Right ventricle myocardium inferior (tissue), 1 donor: ENCODE measurements at regions of chr1 and their contacts with region 1.

Region 1: DNA sequence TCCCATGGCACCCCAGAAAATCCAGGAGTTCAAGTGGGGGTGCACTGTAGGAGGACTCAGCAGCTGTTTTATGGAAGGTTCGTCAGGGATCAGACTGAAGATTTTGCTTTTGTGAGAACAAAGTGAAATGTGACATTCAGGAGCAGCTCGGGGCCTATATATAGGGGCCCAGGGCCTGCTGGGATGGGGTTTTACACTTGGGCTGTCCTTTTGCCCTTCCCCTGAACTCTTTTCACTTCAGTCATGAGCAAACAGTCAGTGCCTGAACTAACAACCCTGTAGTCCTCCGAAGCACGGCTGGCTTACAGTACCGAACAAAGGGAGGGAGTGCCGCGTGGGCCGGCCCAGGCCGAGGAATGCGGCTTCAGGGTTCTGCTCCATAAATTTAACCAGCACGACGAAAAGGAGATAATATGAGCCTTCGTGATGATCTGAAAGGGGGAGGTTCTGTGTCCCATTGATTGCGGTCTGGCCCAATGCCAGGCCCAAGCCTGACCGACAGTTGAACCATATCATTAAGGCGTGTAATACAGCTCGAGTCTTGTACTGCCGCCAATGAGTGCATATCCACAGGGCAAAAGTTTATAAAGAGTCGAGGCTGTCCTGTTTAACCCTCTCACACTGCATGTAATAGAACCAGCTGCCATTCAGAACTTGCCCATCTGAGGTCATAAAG is 139.9 kb downstream of the DHRS3 start:
- DNase-seq: peak; percentile 91
- ATAC-seq: peak; percentile 73

Region 2: DNA sequence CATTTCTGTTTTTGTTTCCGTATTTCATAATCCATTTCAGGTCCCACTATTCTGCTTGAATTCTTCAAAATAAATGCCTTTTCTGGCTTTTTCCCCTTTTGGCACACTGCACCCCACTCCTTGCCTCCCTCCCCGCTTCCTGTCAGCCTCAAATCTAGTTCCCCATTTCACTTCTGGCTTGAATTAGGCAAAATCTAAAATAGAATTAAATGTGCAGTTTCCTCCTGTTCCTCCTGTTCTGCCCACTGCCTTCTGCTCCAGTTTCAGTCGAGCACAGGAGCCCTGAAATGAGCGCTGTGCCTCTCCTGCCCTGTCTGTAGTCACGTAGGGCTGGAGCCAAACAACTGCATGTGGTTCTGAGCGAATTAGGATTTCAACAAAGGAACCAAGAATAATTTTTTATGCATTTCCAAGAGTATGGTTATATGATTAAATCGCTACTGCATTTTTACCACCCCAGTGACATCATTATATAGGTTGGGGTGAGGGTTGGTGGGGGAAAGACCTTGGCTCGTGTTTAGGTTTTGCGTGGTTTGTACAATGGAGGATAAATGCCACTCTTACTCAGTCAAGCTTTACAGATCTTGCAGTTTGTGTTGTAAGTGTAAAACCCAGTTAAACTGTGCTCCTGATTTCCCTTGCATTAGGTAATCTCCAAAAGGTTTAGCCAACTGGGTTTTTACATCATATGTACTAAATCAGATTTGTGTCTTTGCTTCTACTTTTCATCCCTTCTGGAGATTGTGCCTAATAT is 133.3 kb before region 1 on chr1:
- intact Hi-C with region 1: loop called (anchors 5 kb)
- DNase-seq: no peak
- ATAC-seq: peak; percentile 56

Region 3: DNA sequence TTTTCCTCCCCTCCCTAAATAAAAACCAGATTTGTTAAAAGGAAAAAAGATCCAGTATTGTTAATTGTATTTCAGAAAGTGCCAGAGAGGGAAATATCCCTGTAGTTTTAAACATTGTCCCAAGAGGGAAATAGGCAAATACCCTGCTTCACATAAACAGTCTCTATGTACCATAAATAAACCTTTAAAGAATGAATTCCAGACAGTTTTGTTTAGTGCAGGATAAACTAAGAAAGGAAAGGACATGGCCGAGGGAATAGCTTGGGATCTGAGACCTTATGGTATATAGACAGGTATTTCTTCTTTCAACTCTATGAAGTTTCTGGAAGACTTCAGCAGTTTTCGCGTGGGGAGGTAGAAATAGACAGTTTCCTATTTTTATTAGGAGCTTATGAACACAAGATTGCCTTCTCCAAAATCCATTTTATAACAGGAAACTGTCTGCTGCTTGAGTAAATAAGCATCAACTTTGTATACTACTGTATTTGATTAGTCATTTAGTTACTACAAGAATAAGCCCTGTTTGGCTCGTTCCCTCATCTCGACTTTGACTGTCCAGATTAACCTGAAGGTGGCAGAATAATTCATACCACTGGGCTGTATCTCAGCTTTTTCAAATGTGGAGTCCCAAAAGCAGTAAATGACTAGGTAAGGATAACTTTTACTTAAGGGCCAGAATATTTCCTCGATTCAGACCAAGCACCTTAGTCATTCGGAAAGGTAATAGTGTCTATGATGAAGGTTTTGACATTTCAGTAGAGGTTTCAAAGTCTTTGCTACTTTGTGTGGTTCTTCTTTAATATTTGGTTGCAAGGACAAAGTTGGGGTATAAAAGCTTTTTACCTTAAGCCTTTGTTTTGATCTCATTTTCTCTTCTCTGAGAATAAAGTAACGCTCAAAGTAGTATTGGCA is 70.8 kb before region 1 on chr1:
- intact Hi-C with region 1: loop called (anchors 5 kb)
- DNase-seq: no peak
- ATAC-seq: peak; percentile 54

Region 4: GRCh38 chr1:12424087-12424529 is 54.0 kb before region 1 on chr1:
- intact Hi-C with region 1: no loop called
- DNase-seq: no peak
- ATAC-seq: no peak

Region 5: GRCh38 chr1:12435639-12436344 is 42.3 kb before region 1 on chr1:
- intact Hi-C with region 1: loop called (anchors 5 kb)
- DNase-seq: no peak
- ATAC-seq: no peak

Region 6: DNA sequence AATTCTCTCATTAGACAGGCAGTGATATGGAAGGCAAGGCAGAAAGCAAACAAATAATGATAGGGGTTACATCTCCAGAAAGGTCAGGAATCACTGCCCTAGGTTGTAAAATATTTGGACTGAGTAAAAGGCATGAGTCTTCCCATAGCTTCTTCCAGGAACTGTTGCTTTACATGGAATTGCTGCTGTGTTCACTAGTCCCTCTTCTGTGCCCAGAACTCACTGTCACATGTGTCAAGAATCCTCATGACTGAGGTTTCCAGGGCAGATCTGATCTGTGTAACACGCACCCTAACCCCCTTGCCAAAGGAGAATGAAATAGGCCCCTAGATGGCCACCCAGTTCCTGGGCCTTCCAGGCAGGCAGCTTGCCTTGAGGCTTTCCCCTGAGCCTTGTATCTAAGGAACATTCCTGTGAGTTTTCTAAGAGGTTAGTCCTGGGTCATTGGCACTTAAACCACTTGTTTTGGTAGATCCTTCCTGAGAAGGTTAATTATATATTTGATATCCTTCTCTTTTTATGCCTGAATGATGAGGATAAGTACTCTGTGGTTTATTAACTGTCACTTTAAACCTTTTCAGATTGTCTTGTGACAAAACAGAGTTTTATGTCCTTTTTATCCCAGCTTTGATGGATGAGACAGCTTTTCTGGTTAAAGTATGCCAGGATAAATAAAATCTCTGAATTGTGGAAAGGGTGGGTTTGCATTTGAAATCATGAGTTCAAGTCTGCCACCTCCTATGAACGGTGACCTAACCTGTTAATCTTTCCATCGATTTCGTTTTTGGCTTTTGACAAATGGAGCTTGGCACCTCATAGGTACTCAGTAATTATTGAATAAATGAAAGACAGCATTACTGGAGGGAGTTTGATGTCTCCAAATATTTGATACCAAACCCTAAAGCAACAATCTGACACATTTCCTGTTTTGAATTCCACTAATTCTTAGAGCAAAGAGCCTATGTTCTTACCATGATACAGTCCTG is 23.4 kb before region 1 on chr1:
- intact Hi-C with region 1: loop called (anchors 1 kb)
- DNase-seq: no peak
- ATAC-seq: peak; percentile 35

Region 7: GRCh38 chr1:12460911-12461621 is 17.0 kb before region 1 on chr1:
- intact Hi-C with region 1: loop called (anchors 2 kb)
- DNase-seq: peak; percentile 70
- ATAC-seq: peak; percentile 65

Region 8: GRCh38 chr1:12518931-12519692 is 41.0 kb after region 1 on chr1:
- intact Hi-C with region 1: no loop called
- DNase-seq: peak; percentile 90
- ATAC-seq: peak; percentile 95

Region 9: DNA sequence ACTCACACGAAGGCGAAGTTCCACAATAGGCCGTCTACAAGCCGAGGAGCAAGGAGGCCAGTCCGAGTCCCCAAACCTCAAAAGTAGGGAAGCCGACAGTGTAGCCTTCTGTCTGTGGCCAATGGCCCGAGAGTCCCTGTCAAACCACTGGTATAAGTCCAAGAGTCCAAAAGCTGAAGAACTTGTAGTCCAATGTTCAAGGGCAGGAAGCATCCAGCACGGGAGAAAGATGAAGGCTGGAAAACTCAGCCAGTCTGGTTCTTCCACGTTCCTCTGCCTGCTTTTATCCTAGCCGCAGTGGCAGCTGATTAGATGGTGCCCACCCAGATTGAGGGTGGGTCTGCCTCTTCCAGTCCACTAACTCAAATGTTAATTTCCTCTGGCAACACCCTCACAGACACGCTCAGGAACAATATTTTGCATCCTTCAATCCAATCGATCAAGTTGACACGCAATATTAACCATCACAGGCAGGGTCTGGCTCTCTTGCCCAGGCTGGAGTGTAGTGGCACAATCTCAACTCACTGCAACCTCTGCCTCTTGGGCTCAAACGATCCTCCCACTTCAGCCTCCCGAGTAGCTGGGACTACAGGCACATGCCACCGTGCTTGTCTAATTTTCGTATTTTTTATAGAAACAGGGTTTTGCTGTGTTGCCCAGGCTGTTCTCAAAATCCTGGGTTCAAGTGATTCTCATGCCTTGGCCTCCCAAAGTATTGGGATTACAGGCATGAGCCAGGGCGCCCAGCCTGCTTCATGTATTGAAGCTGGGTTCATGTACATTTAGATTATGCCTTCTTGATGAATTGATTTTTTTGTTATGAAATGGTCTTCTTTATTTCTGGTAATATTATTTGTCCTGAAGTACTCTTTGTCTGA is 54.6 kb after region 1 on chr1:
- intact Hi-C with region 1: no loop called
- DNase-seq: no peak
- ATAC-seq: no peak

Region 10: DNA sequence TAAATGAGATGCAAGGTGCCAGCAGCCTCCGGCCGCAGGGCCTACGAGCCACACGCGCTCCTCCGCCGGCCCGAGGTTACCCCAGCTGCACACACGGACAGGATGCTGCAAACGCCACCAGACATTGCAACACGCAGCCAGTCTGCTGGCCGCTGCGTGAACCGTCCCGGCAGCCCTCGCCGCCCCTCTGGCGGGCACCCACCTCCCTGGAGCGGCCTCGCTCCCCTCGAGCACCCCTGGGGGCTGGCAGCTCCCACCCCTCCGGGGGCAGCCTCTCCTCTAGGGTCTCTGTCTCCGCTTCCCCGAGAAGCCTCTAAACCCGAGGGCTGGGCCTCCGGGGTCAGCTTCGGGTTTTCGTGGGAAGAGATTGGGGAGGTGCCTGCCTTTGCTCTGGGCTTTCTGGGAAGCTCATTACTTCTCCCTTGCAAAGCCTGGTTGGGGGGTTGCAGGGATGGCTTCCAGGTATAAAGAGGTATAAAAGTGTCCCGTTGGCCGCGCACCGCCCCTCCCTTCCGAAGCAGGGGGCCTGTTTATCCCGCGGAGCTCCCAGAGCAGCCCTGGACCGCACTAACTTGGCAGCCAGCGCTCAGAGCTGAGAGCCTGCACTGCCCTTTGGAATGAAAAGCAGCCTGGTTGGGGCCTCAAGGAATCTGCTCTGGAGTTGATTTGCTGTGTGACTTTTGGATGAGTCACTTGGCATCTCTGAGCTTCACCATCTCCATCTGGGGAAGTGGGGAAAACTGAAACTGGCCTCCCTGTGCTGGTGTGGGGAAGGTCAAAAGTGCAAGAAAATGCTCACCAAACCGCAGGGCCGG is 118.1 kb after region 1 on chr1:
- intact Hi-C with region 1: loop called (anchors 5 kb)
- DNase-seq: peak; percentile 95
- ATAC-seq: peak; percentile 73

Region 11: GRCh38 chr1:12649971-12650421 is 171.9 kb after region 1 on chr1:
- intact Hi-C with region 1: no loop called
- DNase-seq: no peak
- ATAC-seq: no peak